ENCODE measurements at regions of chrX and their contacts with region 1.

Region 1: DNA sequence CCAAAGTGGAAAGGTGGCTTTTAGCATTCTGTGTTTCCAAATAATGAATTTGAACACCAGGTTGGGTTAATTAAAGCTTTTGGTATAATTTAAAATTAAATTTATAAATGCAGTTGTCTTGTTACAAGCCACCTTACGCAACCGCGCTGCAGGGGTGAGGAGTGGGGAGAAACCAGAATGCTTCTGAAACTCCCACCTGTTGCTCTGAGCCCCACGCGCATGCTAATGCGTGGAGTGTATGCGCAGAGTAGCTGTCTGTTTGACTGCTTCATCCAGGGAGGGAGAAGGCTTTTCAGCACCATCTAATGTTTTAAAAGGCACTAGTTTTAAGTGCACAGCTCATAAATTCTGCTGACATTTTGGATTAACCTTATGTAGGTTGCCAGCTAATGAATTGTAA is 12.5 kb downstream of the OGT start:
- DNase-seq: no peak
- H3K4me3 ChIP-seq: no peak overlapping the region
- H3K27ac ChIP-seq: no peak overlapping the region
- H3K4me1 ChIP-seq: peaks cover 2 to 11% of the 10 kb centered on the region in 2 experiments; a peak in 2 of 4 replicates
- H3K27me3 ChIP-seq: no peaks in the 10 kb centered on the region
- CTCF ChIP-seq: no peak
- EP300 ChIP-seq: no peak
- RAD21 ChIP-seq: no peak

Region 2: GRCh38 chrX:70769659-70770232 is 775.6 kb before region 1 on chrX:
- CTCF ChIA-PET with region 1: no interaction called
- POLR2A ChIA-PET with region 1: no interaction called
- DNase-seq: peak; percentile 8
- H3K4me3 ChIP-seq: no peak overlapping the region
- H3K27ac ChIP-seq: no peak overlapping the region
- H3K4me1 ChIP-seq: no peaks in the 10 kb centered on the region
- H3K27me3 ChIP-seq: no peaks in the 10 kb centered on the region
- CTCF ChIP-seq: peak; percentile 72
- EP300 ChIP-seq: no peak
- RAD21 ChIP-seq: peak; percentile 50

Region 3: GRCh38 chrX:71304561-71304960 is 240.8 kb before region 1 on chrX:
- CTCF ChIA-PET with region 1: no interaction called
- POLR2A ChIA-PET with region 1: no interaction called
- DNase-seq: no peak
- H3K4me3 ChIP-seq: no peak overlapping the region
- H3K27ac ChIP-seq: no peak overlapping the region
- H3K4me1 ChIP-seq: no peaks in the 10 kb centered on the region
- H3K27me3 ChIP-seq: no peaks in the 10 kb centered on the region
- CTCF ChIP-seq: no peak
- EP300 ChIP-seq: no peak
- RAD21 ChIP-seq: no peak

Region 4: GRCh38 chrX:71556036-71556435 is 10.7 kb after region 1 on chrX:
- CTCF ChIA-PET with region 1: interaction called, 10 read pairs
- POLR2A ChIA-PET with region 1: no interaction called
- DNase-seq: no peak
- H3K4me3 ChIP-seq: no peak overlapping the region
- H3K27ac ChIP-seq: no peak overlapping the region
- H3K4me1 ChIP-seq: no peaks in the 10 kb centered on the region
- H3K27me3 ChIP-seq: 0 out of 2 replicates have a peak, but pooled peaks cover 13% of the 10 kb centered on the region
- CTCF ChIP-seq: no peak
- EP300 ChIP-seq: no peak
- RAD21 ChIP-seq: no peak

Region 5: GRCh38 chrX:72069350-72070160 is 524.2 kb after region 1 on chrX:
- CTCF ChIA-PET with region 1: no interaction called
- POLR2A ChIA-PET with region 1: no interaction called
- DNase-seq: no peak
- H3K4me3 ChIP-seq: peak overlapping the region in 1 of 2 experiments; percentile 40; a peak in 2 of 4 replicates
- H3K27ac ChIP-seq: peak overlapping the region in 1 of 2 experiments; percentile 45; a peak in 2 of 4 replicates
- H3K4me1 ChIP-seq: peaks cover 0 to 30% of the 10 kb centered on the region in 2 experiments; a peak in 1 of 4 replicates
- H3K27me3 ChIP-seq: peaks cover 67% of the 10 kb centered on the region
- CTCF ChIP-seq: no peak
- EP300 ChIP-seq: no peak
- RAD21 ChIP-seq: no peak